Activated B cell treated with CpG ODN at 0.5 μM for 24 hours (primary cell): ENCODE measurements at regions of chr7 and their contacts with region 1.

Region 1: DNA sequence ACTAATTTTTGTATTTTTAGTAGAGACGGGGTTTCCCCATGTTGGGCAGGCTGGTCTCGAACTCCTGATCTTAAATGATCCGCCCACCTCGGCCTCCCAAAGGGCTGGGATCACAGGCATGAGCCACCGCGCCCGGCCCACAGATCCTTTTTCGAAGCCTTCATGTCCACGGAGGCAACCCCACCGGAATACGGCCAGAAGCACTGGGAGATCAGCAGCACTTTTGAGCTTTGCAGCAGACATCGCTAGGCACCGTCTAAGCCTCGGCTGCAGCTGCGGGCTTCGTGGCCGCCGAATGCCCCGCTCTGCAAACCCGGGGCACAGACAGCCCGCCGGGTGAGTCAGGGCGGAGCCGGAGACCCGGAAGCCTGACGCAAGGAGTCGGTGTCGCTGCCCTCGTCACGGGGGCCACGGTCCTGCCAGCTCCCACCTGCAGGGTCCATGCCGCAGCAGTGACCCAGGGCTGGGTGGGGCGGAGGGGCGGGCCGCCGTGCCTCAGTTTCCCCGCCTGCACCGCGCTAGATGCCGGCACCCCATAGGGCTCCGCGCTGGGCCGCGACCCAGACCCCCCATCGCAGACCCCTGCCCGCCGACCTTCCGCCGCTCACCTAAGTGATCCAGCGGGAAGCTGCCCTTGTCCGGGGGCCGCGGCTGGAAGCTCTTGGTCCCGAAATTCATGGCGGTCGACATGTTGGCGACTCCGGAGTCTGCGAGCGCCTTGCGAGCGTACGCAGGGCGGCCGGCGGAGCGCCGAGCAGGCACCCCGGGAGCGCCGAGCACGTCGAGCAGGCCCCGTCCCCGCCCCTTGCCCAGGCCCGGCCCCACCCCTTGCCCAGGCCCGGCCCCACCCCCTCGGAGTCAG is at the start of gene COX19:
- DNase-seq: peak; percentile 92
- ATAC-seq: peak; percentile 84
- H3K4me3 Mint-ChIP-seq: peak within 1 kb of the TSS; percentile 91
- H3K27ac Mint-ChIP-seq: peak within 1 kb of the TSS; percentile 86
- H3K4me1 Mint-ChIP-seq: peaks cover 33% of the 10 kb centered on the region
- H3K27me3 Mint-ChIP-seq: no peaks in the 10 kb centered on the region
- CTCF ChIP-seq: no peak
- total RNA-seq, gene COX19: 21.2 and 24.5 TPM in 2 replicates

Region 2: GRCh38 chr7:774161-775109 is 200.6 kb before region 1 on chr7:
- CTCF ChIA-PET with region 1: no interaction called
- POLR2A ChIA-PET with region 1: no interaction called
- intact Hi-C with region 1: no loop called
- DNase-seq: peak; percentile 60
- ATAC-seq: peak; percentile 94
- H3K4me3 Mint-ChIP-seq: no peak overlapping the region
- H3K27ac Mint-ChIP-seq: no peak overlapping the region
- H3K4me1 Mint-ChIP-seq: no peaks in the 10 kb centered on the region
- H3K27me3 Mint-ChIP-seq: no peaks in the 10 kb centered on the region
- CTCF ChIP-seq: peak; percentile 69

Region 3: DNA sequence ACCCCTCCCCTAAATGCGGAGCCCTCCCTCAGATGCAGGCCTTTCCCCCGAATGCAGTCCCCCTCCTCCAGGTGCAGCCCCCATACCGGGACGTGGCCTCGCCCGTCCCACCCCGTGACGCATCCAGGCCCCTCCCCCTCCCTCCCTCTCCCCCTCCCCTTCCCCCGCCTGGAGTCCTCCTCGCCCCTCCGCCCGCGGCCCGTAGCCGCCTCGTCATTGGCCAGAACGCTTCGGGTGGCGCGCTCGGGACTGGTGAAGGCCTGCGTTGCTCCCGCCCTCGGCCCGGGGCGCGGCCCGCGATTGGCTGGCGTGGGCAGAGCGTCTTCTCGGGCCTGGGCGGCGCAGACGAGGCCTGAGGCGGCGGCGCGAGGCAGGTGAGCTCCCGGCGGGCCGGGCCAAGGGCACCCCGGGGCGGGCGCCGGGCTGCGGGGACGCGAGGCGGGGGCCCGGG is 158.7 kb before region 1 on chr7:
- CTCF ChIA-PET with region 1: no interaction called
- POLR2A ChIA-PET with region 1: interaction called, 3 read pairs
- intact Hi-C with region 1: loop called (anchors 10 kb)
- DNase-seq: peak; percentile 94
- ATAC-seq: peak; percentile 92
- H3K4me3 Mint-ChIP-seq: peak overlapping the region; percentile 81
- H3K27ac Mint-ChIP-seq: no peak overlapping the region
- H3K4me1 Mint-ChIP-seq: peaks cover 64% of the 10 kb centered on the region
- H3K27me3 Mint-ChIP-seq: no peaks in the 10 kb centered on the region
- CTCF ChIP-seq: no peak

Region 4: GRCh38 chr7:923108-924041 is 51.7 kb before region 1 on chr7:
- CTCF ChIA-PET with region 1: no interaction called
- POLR2A ChIA-PET with region 1: interaction called, 28 read pairs
- intact Hi-C with region 1: loop called (anchors 1 kb)
- DNase-seq: peak; percentile 72
- ATAC-seq: peak; percentile 85
- H3K4me3 Mint-ChIP-seq: peak overlapping the region; percentile 77
- H3K27ac Mint-ChIP-seq: peak overlapping the region; percentile 84
- H3K4me1 Mint-ChIP-seq: peaks cover 42% of the 10 kb centered on the region
- H3K27me3 Mint-ChIP-seq: no peaks in the 10 kb centered on the region
- CTCF ChIP-seq: no peak

Region 5: DNA sequence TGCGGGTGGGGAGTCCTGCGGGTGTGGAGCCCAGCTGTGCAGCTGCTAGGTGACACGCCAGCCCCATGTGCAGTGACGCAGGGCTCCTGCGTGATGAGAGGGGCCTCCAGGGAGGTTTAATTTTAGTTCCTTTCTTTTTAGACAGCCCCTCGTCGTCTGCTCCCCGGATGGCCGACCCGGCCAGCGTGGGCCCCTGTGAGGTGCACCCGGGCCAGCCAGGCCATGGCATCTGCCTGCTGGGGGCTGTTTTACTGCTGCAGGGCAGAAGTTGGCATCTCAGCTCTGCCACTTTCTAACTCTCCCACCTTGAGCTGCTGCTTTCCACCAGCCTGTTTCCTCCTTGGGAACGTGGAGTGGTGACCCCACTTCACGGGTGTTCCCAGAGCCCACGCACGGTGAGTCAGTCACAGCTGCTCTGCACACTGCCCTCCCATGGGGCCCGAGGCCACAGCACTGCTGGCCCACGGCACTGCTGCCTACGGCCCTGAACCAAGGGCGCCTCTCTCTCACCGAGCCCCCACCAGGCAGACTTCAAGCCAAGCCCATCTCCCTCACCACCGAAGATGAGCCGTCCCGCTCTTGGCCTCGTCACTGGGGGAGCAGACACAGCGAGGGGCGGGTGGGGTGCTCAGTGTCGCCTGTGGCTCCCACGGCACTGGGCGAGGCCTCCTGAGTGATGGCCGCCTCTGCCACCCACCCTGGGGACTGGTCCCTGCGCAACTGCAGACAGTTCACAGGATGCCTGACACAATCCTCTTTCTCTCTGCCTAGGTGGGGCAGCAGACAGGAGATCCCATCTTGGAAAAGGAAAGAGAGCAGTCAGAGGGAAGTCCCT is 29.2 kb after region 1 on chr7:
- CTCF ChIA-PET with region 1: no interaction called
- POLR2A ChIA-PET with region 1: no interaction called
- intact Hi-C with region 1: loop called (anchors 1 kb)
- DNase-seq: peak; percentile 70
- ATAC-seq: peak; percentile 81
- H3K4me3 Mint-ChIP-seq: peak overlapping the region; percentile 64
- H3K27ac Mint-ChIP-seq: peak overlapping the region; percentile 70
- H3K4me1 Mint-ChIP-seq: peaks cover 38% of the 10 kb centered on the region
- H3K27me3 Mint-ChIP-seq: no peaks in the 10 kb centered on the region
- CTCF ChIP-seq: no peak

Region 6: DNA sequence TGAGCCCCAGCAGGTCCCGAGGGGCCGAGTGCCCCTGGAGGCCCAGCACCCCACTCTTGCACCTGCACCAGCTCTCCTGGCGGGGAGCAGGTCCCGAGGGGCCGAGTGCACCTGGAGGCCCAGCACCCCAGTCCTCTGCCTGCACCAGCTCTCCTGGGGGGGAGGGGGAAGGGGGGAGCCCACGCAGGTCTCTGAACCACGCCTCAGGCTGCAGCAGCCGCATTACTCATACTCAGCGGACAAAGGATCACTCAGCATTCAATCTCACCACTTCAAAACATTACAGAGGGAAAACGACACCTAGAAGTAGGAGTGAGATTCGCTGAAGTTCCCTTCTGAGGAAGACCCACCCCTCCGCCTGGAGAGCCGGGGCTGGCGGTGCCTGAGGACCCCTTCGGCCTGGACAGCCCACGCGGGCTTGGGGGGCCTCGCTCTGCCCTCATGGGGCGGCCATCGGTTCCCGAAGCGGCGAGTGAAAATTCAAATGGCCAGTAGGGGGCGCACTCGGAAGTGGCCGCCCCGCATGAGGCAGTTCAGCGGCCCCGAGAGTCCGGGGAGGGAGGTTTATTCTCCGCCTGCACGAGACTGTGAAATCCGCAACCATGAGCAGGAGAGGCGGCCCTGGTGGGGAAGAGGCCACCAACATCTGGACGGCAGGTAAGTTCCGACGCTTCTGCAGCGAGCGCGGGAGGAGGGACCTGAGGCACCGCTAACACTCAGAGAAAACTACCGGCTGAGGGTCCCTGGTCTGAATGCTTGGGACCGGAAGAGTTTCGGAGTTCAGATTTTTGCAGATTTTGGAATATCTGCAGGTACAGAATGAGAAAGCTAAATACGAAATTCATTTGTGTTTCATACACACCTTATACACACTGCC is 111.8 kb after region 1 on chr7:
- CTCF ChIA-PET with region 1: interaction called, 3 read pairs
- POLR2A ChIA-PET with region 1: interaction called, 10 read pairs
- intact Hi-C with region 1: no loop called
- DNase-seq: peak; percentile 77
- ATAC-seq: peak; percentile 91
- H3K4me3 Mint-ChIP-seq: peak overlapping the region; percentile 83
- H3K27ac Mint-ChIP-seq: peak overlapping the region; percentile 70
- H3K4me1 Mint-ChIP-seq: peaks cover 33% of the 10 kb centered on the region
- H3K27me3 Mint-ChIP-seq: no peaks in the 10 kb centered on the region
- CTCF ChIP-seq: peak; percentile 95

Region 7: DNA sequence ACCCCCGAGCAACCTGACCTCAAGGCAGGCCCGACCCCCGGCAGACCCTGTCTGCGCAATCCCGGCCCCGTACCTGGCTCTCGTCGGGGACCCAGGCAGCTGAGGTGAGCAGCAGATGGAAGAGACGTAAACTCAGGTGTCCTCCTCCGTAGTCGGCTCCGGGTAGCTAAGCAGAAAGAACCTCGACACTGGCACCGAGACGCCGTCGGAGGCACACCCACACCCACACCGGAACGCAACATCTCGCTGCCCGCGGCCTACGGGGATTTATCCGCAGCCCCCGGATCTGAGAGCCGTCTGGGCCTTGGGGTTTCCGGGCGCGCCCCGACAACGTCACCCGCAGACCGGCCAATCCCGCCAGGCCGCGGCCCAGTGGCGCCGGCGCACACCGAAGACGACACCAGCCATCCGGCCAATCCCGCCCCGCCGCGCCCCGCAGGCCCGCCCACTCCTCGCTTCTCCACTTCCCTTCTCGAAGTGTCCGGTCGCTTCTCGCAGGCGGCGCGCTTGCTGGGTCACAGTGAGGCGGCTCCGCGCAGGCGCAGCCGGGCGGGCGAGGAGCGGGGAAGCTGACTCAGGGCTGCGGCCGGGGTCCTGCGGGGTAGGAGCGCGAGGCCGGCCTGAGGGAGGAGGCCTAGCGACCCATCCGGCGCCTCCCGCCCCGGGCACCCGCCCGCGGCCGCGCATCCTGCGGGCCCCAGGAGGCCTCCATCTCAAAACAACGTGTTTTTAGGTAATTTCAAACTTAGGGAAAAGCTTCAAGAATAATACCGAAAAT is 185.0 kb after region 1 on chr7 and contains the start of gene ZFAND2A:
- CTCF ChIA-PET with region 1: no interaction called
- POLR2A ChIA-PET with region 1: interaction called, 10 read pairs
- intact Hi-C with region 1: no loop called
- DNase-seq: peak; percentile 99
- ATAC-seq: peak; percentile 97
- H3K4me3 Mint-ChIP-seq: peak within 1 kb of the TSS; percentile 88
- H3K27ac Mint-ChIP-seq: peak within 1 kb of the TSS; percentile 79
- H3K4me1 Mint-ChIP-seq: peaks cover 25% of the 10 kb centered on the region
- H3K27me3 Mint-ChIP-seq: no peaks in the 10 kb centered on the region
- CTCF ChIP-seq: no peak
- total RNA-seq, gene ZFAND2A: 20.4 and 21.6 TPM in 2 replicates